Mammary epithelial cell (primary cell): ENCODE measurements at regions of chr2 and their contacts with region 1.

Region 1: DNA sequence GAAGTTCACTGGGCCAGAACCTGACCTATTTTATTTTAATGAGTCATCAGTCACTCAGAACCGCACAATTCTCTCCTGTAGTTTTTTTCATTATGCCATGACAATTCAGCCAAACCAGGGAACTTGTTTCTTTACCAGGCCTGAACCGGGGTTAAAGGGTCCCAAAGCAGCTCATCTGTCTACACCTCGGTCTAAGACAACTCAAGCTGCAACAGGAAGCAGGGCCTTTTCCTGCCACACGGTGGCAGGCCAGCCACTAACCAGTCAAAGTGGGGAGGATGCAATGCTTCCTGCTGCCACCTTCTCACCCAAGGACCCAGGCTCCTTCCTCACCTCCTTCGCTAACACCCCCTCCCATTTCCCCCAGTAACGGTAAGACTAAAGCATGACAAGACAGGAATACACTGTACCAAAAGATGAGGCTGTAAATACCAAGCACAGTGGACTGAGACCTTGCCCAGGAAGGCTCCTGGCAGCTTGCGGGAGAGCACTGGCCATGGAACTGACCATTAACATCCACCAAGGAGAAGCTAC is 56.7 kb upstream of the ACKR3 start:
- DNase-seq: peak; percentile 29
- H3K4me3 ChIP-seq: no peak overlapping the region
- H3K27ac ChIP-seq: no peak overlapping the region
- H3K4me1 ChIP-seq: no peaks in the 10 kb centered on the region
- H3K27me3 ChIP-seq: no peaks in the 10 kb centered on the region
- CTCF ChIP-seq: peak; percentile 81 to 90

Region 2: DNA sequence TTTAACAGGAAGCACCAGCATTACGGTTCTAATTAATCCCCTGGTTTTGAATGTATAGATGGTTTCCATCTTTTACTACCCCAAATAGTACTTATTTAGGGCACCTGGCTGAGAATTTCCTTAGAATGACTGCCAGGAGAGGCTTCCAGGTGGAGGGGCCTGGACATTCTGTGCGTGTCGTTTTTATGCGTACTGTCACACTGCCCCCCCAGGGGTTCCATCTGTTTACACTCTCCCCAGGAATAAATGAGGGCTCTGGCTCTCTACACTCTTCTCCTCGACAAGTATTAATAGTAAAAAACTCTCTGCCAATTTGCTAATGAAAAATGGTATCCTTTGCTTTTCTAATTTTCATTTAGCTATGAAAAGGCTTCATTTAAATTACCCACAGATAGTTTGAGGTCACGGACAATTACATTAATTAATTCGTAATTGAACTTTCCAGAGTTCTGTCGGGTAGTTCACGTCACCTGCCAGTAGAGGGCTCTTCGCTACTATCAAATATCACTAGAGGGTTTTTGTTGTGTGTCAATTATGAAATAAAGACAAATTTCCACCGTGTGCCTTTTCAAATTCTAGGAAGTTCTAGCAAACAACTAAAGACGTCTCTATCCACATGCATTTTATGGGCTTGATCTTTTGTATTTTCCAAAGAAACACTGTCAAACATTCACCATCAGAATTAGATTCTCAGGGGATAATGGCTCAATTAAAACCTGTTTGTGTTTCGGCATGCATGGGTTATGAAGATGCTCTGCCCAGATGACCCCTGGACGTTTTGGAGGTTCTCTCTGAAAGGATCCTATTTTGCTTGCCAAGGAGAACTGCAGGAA is 160.0 kb before region 1 on chr2:
- CTCF ChIA-PET with region 1: no interaction called
- dilution Hi-C with region 1: no loop called
- in situ Hi-C with region 1: no loop called
- intact Hi-C with region 1: loop called (anchors 1 kb)
- DNase-seq: peak; percentile 9
- H3K4me3 ChIP-seq: no peak overlapping the region
- H3K27ac ChIP-seq: no peak overlapping the region
- H3K4me1 ChIP-seq: no peaks in the 10 kb centered on the region
- H3K27me3 ChIP-seq: no peaks in the 10 kb centered on the region
- CTCF ChIP-seq: peak; percentile 71 to 78

Region 3: GRCh38 chr2:236498369-236498768 is 14.6 kb before region 1 on chr2:
- CTCF ChIA-PET with region 1: no interaction called
- dilution Hi-C with region 1: no loop called
- in situ Hi-C with region 1: no loop called
- intact Hi-C with region 1: no loop called
- DNase-seq: peak; percentile 39
- H3K4me3 ChIP-seq: no peak overlapping the region
- H3K27ac ChIP-seq: no peak overlapping the region
- H3K4me1 ChIP-seq: peaks cover 10% of the 10 kb centered on the region
- H3K27me3 ChIP-seq: no peaks in the 10 kb centered on the region
- CTCF ChIP-seq: no peak

Region 4: DNA sequence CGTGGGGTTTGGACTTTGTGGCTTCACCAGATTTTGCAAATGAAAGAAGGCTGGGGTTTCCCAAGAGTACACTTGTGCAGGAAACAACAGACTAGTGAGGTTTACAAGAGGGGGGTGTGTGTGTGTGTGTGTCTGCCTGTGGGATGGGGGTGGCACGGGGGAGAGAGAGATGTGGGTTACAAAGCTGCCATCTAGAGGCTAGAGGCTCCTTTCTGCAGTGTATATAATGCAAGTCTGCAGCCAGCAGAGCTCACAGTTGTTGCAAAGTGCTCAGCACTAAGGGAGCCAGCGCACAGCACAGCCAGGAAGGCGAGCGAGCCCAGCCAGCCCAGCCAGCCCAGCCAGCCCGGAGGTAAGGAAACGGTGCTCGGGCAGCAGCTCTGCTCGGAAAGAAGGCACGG is 56.6 kb after region 1 on chr2 and contains the start of gene ACKR3:
- CTCF ChIA-PET with region 1: no interaction called
- dilution Hi-C with region 1: no loop called
- in situ Hi-C with region 1: no loop called
- intact Hi-C with region 1: loop called (anchors 1 kb)
- DNase-seq: peak; percentile 75
- H3K4me3 ChIP-seq: peak within 1 kb of the TSS; percentile 25 to 44 (median 34)
- H3K27ac ChIP-seq: no peak within 1 kb of the TSS
- H3K4me1 ChIP-seq: no peaks in the 10 kb centered on the region
- H3K27me3 ChIP-seq: no peaks in the 10 kb centered on the region
- CTCF ChIP-seq: peak; percentile 44 to 62
- total RNA-seq, gene ACKR3: 1.8 to 79.0 TPM

Region 5: DNA sequence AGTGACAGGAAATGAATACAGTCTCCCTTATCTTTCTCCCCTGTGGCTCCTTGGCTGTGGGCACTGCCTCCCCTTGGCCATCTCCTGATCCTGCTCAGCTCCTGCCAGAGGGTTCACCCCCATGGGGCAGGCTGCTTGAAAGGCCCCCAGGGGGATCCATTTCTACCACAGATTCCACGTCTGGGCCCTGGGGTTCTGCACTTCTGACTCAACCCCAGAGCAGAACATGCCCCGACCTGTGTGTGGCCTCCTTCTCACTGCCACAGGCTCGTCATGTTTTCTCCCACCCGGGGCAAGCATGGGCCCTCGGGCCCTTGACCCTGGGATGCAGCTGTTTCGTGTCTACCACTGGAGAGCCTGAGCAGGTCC is 178.8 kb after region 1 on chr2:
- CTCF ChIA-PET with region 1: interaction called, 3 read pairs
- dilution Hi-C with region 1: no loop called
- in situ Hi-C with region 1: no loop called
- intact Hi-C with region 1: loop called (anchors 10 kb)
- DNase-seq: peak; percentile 87
- H3K4me3 ChIP-seq: no peak overlapping the region
- H3K27ac ChIP-seq: peak overlapping the region; percentile 73
- H3K4me1 ChIP-seq: peaks cover 48% of the 10 kb centered on the region
- H3K27me3 ChIP-seq: no peaks in the 10 kb centered on the region
- CTCF ChIP-seq: no peak

Region 6: DNA sequence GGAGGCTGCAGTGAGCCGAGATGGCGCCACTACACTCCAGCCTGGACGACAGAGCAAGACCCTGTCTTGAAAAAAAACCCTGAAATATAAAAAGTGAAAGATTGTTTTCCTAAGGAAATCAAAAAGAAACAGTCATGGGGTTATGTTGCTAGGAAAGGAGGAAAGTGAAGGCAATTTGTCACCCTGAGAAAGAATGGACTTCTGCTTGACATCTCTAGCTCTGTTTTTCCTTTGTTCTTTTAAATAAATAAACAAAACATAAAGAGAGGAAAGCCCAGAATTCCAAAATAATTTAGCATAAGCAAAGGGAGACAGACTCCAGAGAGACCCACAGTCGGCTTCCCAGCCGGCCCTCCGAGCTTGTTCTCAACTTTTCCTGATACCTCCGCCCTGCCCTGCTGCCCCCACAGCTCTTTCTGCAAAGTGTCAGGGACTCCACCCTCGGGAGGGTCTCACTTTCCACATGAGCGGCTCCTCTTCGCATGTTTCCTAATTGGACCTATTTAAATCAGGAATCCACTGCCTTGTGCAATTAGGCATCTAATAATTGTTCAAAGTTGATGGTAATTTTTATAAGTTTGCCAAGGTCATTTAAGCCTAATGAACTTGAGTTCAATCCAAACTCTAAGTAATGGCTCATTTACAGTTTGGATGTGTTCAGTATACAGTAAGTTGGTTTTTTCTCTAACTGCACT is 523.0 kb after region 1 on chr2:
- CTCF ChIA-PET with region 1: no interaction called
- dilution Hi-C with region 1: loop called (anchors 10 kb)
- in situ Hi-C with region 1: no loop called
- intact Hi-C with region 1: no loop called
- DNase-seq: no peak
- H3K4me3 ChIP-seq: no peak overlapping the region
- H3K27ac ChIP-seq: no peak overlapping the region
- H3K4me1 ChIP-seq: no peaks in the 10 kb centered on the region
- H3K27me3 ChIP-seq: no peaks in the 10 kb centered on the region
- CTCF ChIP-seq: no peak

Region 7: GRCh38 chr2:237060534-237061312 is 547.8 kb after region 1 on chr2:
- CTCF ChIA-PET with region 1: no interaction called
- dilution Hi-C with region 1: no loop called
- in situ Hi-C with region 1: no loop called
- intact Hi-C with region 1: loop called (anchors 1 kb)
- DNase-seq: peak; percentile 37
- H3K4me3 ChIP-seq: no peak overlapping the region
- H3K27ac ChIP-seq: no peak overlapping the region
- H3K4me1 ChIP-seq: no peaks in the 10 kb centered on the region
- H3K27me3 ChIP-seq: no peaks in the 10 kb centered on the region
- CTCF ChIP-seq: peak; percentile 40 to 67